Gastrocnemius medialis (tissue), 4 donors: ENCODE measurements at regions of chr4 and their contacts with region 1.

Region 1: GRCh38 chr4:89226665-89227574 is 80.7 kb downstream of the GPRIN3 start:
- DNase-seq: peak; percentile 15 to 45
- ATAC-seq: peak; percentile 66 to 84
- H3K4me3 ChIP-seq: no peak overlapping the region
- H3K27ac ChIP-seq: no peak overlapping the region
- H3K4me1 ChIP-seq: no peaks in the 10 kb centered on the region
- H3K27me3 ChIP-seq: no peaks in the 10 kb centered on the region
- CTCF ChIP-seq: peak in 3 of 5 experiments; percentile 50 to 57 (median 57)
- POLR2A ChIP-seq: no peak

Region 2: GRCh38 chr4:89213062-89213701 is 13.7 kb before region 1 on chr4:
- in situ Hi-C with region 1: no loop called
- intact Hi-C with region 1: no loop called
- DNase-seq: no peak
- ATAC-seq: no peak
- H3K4me3 ChIP-seq: no peak overlapping the region
- H3K27ac ChIP-seq: no peak overlapping the region
- H3K4me1 ChIP-seq: no peaks in the 10 kb centered on the region
- H3K27me3 ChIP-seq: no peaks in the 10 kb centered on the region
- CTCF ChIP-seq: no peak
- POLR2A ChIP-seq: no peak

Region 3: GRCh38 chr4:89242864-89243732 is 16.2 kb after region 1 on chr4:
- in situ Hi-C with region 1: no loop called
- intact Hi-C with region 1: no loop called
- DNase-seq: no peak
- ATAC-seq: no peak
- H3K4me3 ChIP-seq: no peak overlapping the region
- H3K27ac ChIP-seq: no peak overlapping the region
- H3K4me1 ChIP-seq: no peaks in the 10 kb centered on the region
- H3K27me3 ChIP-seq: no peaks in the 10 kb centered on the region
- CTCF ChIP-seq: no peak
- POLR2A ChIP-seq: no peak

Region 4: DNA sequence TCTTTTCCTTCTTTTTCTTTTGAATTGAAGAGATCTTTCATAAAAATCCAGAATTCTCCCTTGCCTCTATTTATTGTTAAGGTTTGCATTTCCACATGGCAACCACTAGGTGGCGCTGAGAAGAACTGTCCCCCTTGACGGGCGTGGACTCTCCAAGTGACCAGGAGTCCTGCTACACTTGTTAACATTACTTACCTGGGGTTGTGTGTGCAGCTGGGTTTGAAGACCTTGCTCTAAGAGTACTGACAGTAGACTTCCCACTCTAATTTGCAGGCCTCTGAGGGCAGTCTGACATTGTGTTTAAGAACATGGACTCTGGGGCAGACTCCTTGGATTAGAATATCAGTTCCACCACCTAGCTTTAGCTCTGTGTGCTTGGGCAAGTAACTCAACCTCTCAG is 27.9 kb after region 1 on chr4:
- in situ Hi-C with region 1: no loop called
- intact Hi-C with region 1: no loop called
- DNase-seq: no peak
- ATAC-seq: no peak
- H3K4me3 ChIP-seq: no peak overlapping the region
- H3K27ac ChIP-seq: no peak overlapping the region
- H3K4me1 ChIP-seq: no peaks in the 10 kb centered on the region
- H3K27me3 ChIP-seq: no peaks in the 10 kb centered on the region
- CTCF ChIP-seq: peak in 2 of 5 experiments; percentile 34 to 49
- POLR2A ChIP-seq: no peak

Region 5: DNA sequence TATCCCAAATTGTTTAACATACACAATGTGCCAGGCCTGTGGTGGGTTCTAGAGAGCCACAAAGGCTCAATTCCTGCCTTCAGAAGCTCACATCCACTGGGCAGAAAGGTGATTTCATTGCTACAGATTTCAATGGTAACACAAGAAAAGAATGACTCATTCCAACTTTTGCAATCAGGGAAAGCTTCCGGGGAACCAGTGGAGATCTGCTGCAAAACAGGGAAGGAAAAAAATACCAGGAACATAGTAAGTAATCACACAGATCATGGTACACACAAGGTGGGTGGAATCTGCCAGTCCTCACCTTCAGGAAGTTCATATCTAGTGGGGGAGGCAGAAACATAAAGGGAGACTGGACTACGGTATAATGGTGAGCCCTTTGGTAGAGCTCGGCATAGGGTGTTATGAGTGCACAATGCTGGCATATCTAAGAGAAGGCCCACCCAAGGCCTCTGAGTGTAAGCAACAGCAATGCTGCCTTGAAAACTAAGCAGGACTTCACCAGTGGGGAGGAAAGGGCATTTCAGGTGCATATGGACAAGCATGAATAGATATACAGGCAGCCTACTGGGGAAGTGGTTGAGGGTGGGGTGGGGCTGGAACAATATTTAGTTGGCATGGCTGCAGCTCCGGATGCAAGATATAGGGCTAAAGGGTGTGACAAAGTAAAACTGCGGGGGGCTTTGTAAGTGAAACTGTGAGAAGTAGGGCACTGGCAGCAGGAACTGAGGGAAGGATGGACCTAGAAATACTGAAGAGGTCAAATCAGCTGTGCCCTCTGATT is 56.5 kb after region 1 on chr4:
- in situ Hi-C with region 1: no loop called
- intact Hi-C with region 1: no loop called
- DNase-seq: no peak
- ATAC-seq: no peak
- H3K4me3 ChIP-seq: no peak overlapping the region
- H3K27ac ChIP-seq: no peak overlapping the region
- H3K4me1 ChIP-seq: no peaks in the 10 kb centered on the region
- H3K27me3 ChIP-seq: no peaks in the 10 kb centered on the region
- CTCF ChIP-seq: no peak
- POLR2A ChIP-seq: no peak

Region 6: GRCh38 chr4:89420507-89420906 is 193.6 kb after region 1 on chr4:
- in situ Hi-C with region 1: loop called in 1 of 4 experiments (anchors 10 kb)
- intact Hi-C with region 1: no loop called
- DNase-seq: no peak
- ATAC-seq: no peak
- H3K4me3 ChIP-seq: no peak overlapping the region
- H3K27ac ChIP-seq: no peak overlapping the region
- H3K4me1 ChIP-seq: no peaks in the 10 kb centered on the region
- H3K27me3 ChIP-seq: no peaks in the 10 kb centered on the region
- CTCF ChIP-seq: no peak
- POLR2A ChIP-seq: no peak

Region 7: GRCh38 chr4:89434364-89434988 is 207.6 kb after region 1 on chr4:
- in situ Hi-C with region 1: loop called in 2 of 4 experiments (anchors 10 kb)
- intact Hi-C with region 1: loop called (anchors 5 kb)
- DNase-seq: no peak
- ATAC-seq: no peak
- H3K4me3 ChIP-seq: no peak overlapping the region
- H3K27ac ChIP-seq: no peak overlapping the region
- H3K4me1 ChIP-seq: no peaks in the 10 kb centered on the region
- H3K27me3 ChIP-seq: no peaks in the 10 kb centered on the region
- CTCF ChIP-seq: peak in 2 of 5 experiments; percentile 34 to 46
- POLR2A ChIP-seq: no peak

Region 8: GRCh38 chr4:89906777-89907521 is 680.0 kb after region 1 on chr4:
- in situ Hi-C with region 1: loop called in 1 of 4 experiments (anchors 25 kb)
- intact Hi-C with region 1: loop called (anchors 10 kb)
- DNase-seq: no peak
- ATAC-seq: no peak
- H3K4me3 ChIP-seq: no peak overlapping the region
- H3K27ac ChIP-seq: no peak overlapping the region
- H3K4me1 ChIP-seq: no peaks in the 10 kb centered on the region
- H3K27me3 ChIP-seq: no peaks in the 10 kb centered on the region
- CTCF ChIP-seq: no peak
- POLR2A ChIP-seq: no peak

Region 9: GRCh38 chr4:89914609-89915550 is 688.0 kb after region 1 on chr4:
- in situ Hi-C with region 1: loop called in 1 of 4 experiments (anchors 25 kb)
- intact Hi-C with region 1: no loop called
- DNase-seq: no peak
- ATAC-seq: no peak
- H3K4me3 ChIP-seq: no peak overlapping the region
- H3K27ac ChIP-seq: no peak overlapping the region
- H3K4me1 ChIP-seq: no peaks in the 10 kb centered on the region
- H3K27me3 ChIP-seq: no peaks in the 10 kb centered on the region
- CTCF ChIP-seq: no peak
- POLR2A ChIP-seq: no peak